Calu3 (cell line): ENCODE measurements at regions of chr22 and their contacts with region 1.

Region 1: GRCh38 chr22:30423982-30424963 is 1.3 kb upstream of the MTFP1 start:
- DNase-seq: peak; percentile 98
- H3K4me3 Mint-ChIP-seq: peak overlapping the region; percentile 95
- H3K27ac Mint-ChIP-seq: peak overlapping the region; percentile 87
- H3K4me1 Mint-ChIP-seq: peaks cover 50% of the 10 kb centered on the region
- H3K27me3 Mint-ChIP-seq: no peaks in the 10 kb centered on the region
- CTCF ChIP-seq: no peak

Region 2: DNA sequence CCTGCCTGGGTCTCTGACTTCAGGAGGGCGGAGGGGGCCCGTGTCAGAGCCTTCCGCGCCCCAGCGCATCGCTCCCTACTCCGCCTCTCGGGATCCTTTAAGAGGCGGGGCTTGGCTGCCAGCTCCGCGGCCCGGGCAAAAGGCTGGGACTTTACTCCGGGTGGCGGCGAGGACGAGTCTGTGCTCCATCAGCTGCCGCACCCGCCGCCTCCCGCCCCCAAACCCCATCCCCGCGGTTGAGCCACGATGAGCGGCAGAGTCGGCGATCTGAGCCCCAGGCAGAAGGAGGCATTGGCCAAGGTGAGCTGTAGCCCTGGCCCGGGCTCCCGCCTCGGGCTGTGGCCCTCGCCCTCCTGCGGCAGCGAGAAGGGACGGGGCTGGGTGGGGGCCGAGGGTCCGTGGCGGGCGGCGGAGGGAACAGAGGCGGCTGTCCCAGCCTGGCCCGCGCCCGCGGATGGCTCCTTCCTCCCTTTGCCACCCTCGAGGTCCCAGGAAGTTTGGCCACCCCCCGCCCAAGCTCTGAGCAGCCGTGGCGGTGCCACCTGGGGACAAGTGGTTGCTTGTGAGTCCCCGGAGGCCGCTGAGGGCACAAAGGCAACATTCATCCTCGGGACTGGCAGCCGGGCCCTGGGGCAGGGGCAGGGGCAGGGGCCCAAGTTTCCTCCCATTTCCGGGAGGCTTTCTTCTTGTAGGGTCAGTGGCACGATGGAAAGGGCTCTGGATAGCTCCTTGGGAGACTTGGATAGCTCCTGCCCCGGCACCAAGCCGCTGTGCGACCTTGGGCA is 27.2 kb before region 1 on chr22 and contains the start of gene SEC14L2:
- CTCF ChIA-PET with region 1: interaction called, 12 read pairs
- intact Hi-C with region 1: loop called (anchors 2 kb)
- DNase-seq: peak; percentile 76
- H3K4me3 Mint-ChIP-seq: peak within 1 kb of the TSS; percentile 90
- H3K27ac Mint-ChIP-seq: peak within 1 kb of the TSS; percentile 67
- H3K4me1 Mint-ChIP-seq: peaks cover 21% of the 10 kb centered on the region
- H3K27me3 Mint-ChIP-seq: no peaks in the 10 kb centered on the region
- CTCF ChIP-seq: no peak
- total RNA-seq, gene SEC14L2: 32.1 and 39.1 TPM in 2 replicates

Region 3: GRCh38 chr22:30453731-30454510 is 29.6 kb after region 1 on chr22:
- CTCF ChIA-PET with region 1: interaction called, 10 read pairs
- intact Hi-C with region 1: no loop called
- DNase-seq: peak; percentile 23
- H3K4me3 Mint-ChIP-seq: no peak overlapping the region
- H3K27ac Mint-ChIP-seq: no peak overlapping the region
- H3K4me1 Mint-ChIP-seq: no peaks in the 10 kb centered on the region
- H3K27me3 Mint-ChIP-seq: peaks cover 68% of the 10 kb centered on the region
- CTCF ChIP-seq: no peak